Activated naive CD4-positive, alpha-beta T cell treated with anti-CD3 and anti-CD28 coated beads, Interleukin-2, amount 10 ng/mL, durations not matched to agents 7 days and 5 days (primary cell): ENCODE measurements at regions of chr5 and their contacts with region 1.

Region 1: GRCh38 chr5:180784497-180785097 is 18.0 kb downstream of the MGAT1 start:
- DNase-seq: peak; percentile 83
- H3K4me3 Mint-ChIP-seq: no peak overlapping the region
- H3K27ac Mint-ChIP-seq: no peak overlapping the region
- H3K4me1 Mint-ChIP-seq: peaks cover 19% of the 10 kb centered on the region
- H3K27me3 Mint-ChIP-seq: peaks cover 4% of the 10 kb centered on the region

Region 2: DNA sequence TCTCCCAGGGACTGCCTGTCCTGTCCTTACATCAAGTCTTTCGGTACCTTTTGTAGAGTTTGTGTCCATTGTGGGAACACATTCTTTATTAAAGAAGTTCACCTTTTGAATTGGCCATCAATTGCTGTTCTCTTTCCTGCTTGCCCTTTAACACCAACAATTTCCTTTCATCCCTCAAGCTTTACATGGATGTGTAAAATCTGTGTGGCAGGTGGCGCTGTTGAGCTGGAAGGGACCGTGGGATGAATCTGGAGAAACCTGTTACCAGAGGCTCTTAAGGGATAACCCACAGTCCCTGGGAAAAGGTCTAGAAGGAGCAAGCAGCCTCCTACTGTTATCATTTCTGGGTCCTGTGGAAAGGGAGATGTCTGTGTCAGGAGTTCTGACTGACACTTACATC is 84.4 kb after region 1 on chr5:
- CTCF ChIA-PET with region 1: interaction called, 14 read pairs
- DNase-seq: peak; percentile 81
- H3K4me3 Mint-ChIP-seq: no peak overlapping the region
- H3K27ac Mint-ChIP-seq: no peak overlapping the region
- H3K4me1 Mint-ChIP-seq: peaks cover 8% of the 10 kb centered on the region
- H3K27me3 Mint-ChIP-seq: peaks cover 23% of the 10 kb centered on the region